ENCODE measurements at regions of chr11 and their contacts with region 1.

Region 1: GRCh38 chr11:111777094-111778046 is 11.2 kb upstream of the PPP2R1B start:
- DNase-seq: peak; percentile 65 to 84 (median 82)
- H3K4me3 ChIP-seq: no peak overlapping the region
- H3K27ac ChIP-seq: no peak overlapping the region
- H3K4me1 ChIP-seq: peaks cover 0 to 4% (median 0%) of the 10 kb centered on the region in 4 experiments
- H3K27me3 ChIP-seq: no peaks in the 10 kb centered on the region

Region 2: DNA sequence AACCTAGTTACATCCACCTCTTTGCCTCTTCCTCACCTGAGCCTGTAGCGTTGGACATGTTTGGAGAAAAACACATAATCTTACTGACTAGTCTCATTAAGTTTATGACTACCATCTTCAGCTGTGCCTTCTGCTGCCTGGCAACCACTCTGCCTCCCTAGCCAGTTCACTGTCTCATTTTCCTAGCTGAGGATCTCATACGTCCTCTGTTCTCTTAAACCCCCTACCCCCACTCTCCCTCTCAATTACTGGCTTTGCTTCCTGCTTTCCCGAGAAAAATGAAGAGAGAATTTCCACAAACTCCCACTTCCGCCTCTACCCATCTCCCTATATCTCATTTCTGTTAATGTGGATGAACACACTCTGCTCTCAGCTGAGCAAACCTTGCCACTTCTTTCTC is 771.1 kb before region 1 on chr11:
- CTCF ChIA-PET with region 1: no interaction called
- POLR2A ChIA-PET with region 1: no interaction called
- DNase-seq: no peak
- H3K4me3 ChIP-seq: no peak overlapping the region
- H3K27ac ChIP-seq: no peak overlapping the region
- H3K4me1 ChIP-seq: no peaks in the 10 kb centered on the region
- H3K27me3 ChIP-seq: no peaks in the 10 kb centered on the region

Region 3: GRCh38 chr11:111565114-111565720 is 212.2 kb before region 1 on chr11:
- CTCF ChIA-PET with region 1: interaction called, 47 read pairs
- POLR2A ChIA-PET with region 1: no interaction called
- DNase-seq: peak; percentile 64 to 81 (median 69)
- H3K4me3 ChIP-seq: no peak overlapping the region
- H3K27ac ChIP-seq: no peak overlapping the region
- H3K4me1 ChIP-seq: peaks cover 0 to 11% (median 4%) of the 10 kb centered on the region in 4 experiments
- H3K27me3 ChIP-seq: no peaks in the 10 kb centered on the region

Region 4: DNA sequence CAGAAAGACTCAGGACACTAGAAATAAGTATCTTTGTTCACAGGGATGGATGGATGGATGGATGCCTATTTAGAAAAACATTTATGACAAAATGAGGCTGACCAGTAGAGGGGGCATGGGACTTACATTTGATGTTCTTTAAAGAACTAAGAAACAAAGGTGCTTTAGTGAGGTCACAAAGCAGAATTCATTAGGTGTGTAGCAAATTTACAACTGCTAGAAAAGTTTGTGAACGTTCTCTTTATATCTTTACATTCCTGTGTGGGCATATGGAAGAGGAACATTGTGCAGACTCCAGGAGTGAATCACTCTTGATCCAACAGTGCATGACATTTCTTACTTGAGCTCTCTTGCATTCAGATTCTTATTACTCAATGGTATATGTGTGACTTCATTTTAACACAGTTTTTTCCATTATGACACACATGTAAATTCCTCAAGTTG is 191.0 kb before region 1 on chr11:
- CTCF ChIA-PET with region 1: interaction called, 19 read pairs
- POLR2A ChIA-PET with region 1: no interaction called
- DNase-seq: peak; percentile 63 to 82 (median 74)
- H3K4me3 ChIP-seq: no peak overlapping the region
- H3K27ac ChIP-seq: no peak overlapping the region
- H3K4me1 ChIP-seq: peaks cover 17 to 35% (median 23%) of the 10 kb centered on the region in 4 experiments
- H3K27me3 ChIP-seq: no peaks in the 10 kb centered on the region

Region 5: GRCh38 chr11:111601979-111602864 is 175.1 kb before region 1 on chr11 and contains the start of gene SIK2:
- CTCF ChIA-PET with region 1: interaction called, 18 read pairs
- POLR2A ChIA-PET with region 1: interaction called, 3 read pairs
- DNase-seq: peak; percentile 96 to 98 (median 98)
- H3K4me3 ChIP-seq: peak within 1 kb of the TSS; percentile 72 to 97 (median 87)
- H3K27ac ChIP-seq: peak within 1 kb of the TSS; percentile 72 to 86
- H3K4me1 ChIP-seq: peaks cover 12 to 22% (median 20%) of the 10 kb centered on the region in 4 experiments
- H3K27me3 ChIP-seq: no peaks in the 10 kb centered on the region

Region 6: DNA sequence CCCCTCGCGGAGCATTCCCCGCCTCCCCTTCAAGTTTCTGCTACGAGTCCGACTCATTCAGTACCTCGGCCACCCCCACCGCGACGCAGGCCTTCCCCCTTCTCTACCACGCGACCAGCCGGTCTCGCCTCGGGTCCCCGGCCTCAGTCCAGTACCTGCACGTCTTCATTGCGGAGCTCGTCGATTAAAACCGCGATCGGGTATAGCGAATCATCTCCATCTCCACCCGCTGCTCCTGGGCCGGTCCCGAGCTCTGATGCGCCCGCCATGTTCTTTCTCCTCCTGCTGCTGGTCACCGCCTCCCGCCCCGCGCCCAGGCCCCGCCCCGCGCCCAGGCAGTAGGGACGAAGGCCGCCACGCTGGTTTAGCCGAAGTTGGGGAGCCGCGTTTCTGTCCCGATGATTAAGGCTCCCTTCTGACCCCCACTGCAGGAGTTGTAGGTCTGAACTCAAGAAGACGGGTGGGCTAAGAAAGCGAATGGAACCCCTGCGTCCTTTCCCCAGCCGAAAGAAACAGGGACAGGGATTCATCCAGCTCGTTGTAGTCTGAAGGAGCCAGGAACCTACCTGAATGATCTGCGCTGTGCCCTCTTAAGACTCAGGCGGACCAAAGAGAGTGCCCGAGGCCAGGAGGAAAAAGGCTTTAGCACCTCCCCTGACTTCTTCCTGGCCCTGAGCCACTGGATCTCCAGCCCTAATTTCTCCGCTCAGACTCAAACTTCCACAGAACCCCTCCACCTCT is 11.1 kb before region 1 on chr11 and contains the start of gene PPP2R1B:
- CTCF ChIA-PET with region 1: interaction called, 42 read pairs
- POLR2A ChIA-PET with region 1: no interaction called
- DNase-seq: peak; percentile 54 to 79 (median 73)
- H3K4me3 ChIP-seq: peak within 1 kb of the TSS; percentile 85 to 99 (median 96)
- H3K27ac ChIP-seq: peak within 1 kb of the TSS; percentile 21 to 64
- H3K4me1 ChIP-seq: peaks cover 5 to 20% (median 13%) of the 10 kb centered on the region in 4 experiments
- H3K27me3 ChIP-seq: no peaks in the 10 kb centered on the region

Region 7: GRCh38 chr11:111797145-111797581 is 19.8 kb after region 1 on chr11:
- CTCF ChIA-PET with region 1: interaction called, 27 read pairs
- POLR2A ChIA-PET with region 1: no interaction called
- DNase-seq: peak; percentile 21 to 70 (median 65)
- H3K4me3 ChIP-seq: no peak overlapping the region
- H3K27ac ChIP-seq: no peak overlapping the region
- H3K4me1 ChIP-seq: peaks cover 0 to 3% (median 0%) of the 10 kb centered on the region in 4 experiments
- H3K27me3 ChIP-seq: no peaks in the 10 kb centered on the region

Measured in common myeloid progenitor, CD34-positive (primary cell).